ENCODE measurements at regions of chr1 and their contacts with region 1.

Region 1: DNA sequence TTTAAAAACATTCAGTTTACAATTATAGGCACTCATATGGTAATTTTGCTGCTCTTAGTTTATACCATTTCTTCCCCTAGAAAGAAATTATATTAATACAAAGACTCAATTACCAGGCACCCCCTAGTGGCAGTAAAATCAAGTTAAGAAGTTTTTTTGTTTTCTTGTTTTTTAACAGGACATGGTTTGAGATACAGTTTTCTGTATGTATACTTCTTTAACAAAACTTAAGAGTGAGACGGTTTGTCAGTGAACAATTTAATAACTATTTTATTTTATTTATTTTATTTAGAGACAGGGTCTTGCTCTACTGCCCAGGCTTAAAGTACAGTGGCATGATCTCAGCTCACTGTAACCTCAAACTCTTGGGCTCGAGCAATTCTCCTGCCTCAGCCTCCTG is 224.6 kb downstream of the FAF1 start:
- DNase-seq: peak; percentile 33
- ATAC-seq: peak; percentile 65
- H3K4me3 ChIP-seq: no peak overlapping the region
- H3K27ac ChIP-seq: no peak overlapping the region
- H3K4me1 ChIP-seq: no peaks in the 10 kb centered on the region
- H3K27me3 ChIP-seq: no peaks in the 10 kb centered on the region
- CTCF ChIP-seq: peak; percentile 60
- POLR2A ChIP-seq: no peak
- RAD21 ChIP-seq: peak; percentile 41

Region 2: DNA sequence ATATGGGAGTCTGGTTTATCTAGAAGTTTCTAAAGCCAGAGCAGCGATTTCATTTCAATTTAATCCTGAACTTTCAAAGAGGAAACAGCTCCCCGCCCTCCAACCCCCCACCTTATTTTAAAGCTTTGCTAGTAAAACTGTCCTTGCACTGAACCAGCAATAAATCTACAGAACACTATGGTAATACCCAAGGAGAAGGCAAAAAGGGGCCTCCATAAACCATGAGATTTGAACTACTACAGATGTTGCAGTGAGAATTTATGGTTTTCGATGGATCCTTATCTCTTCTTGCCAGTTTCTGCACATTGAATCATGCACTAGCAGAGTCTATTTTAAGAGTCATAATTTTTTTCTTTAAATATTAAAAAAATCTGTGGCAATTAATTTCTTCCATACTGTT is 1894.0 kb before region 1 on chr1:
- CTCF ChIA-PET with region 1: no interaction called
- POLR2A ChIA-PET with region 1: no interaction called
- dilution Hi-C with region 1: no loop called
- in situ Hi-C with region 1: no loop called
- intact Hi-C with region 1: no loop called
- DNase-seq: no peak
- ATAC-seq: no peak
- H3K4me3 ChIP-seq: no peak overlapping the region
- H3K27ac ChIP-seq: no peak overlapping the region
- H3K4me1 ChIP-seq: no peaks in the 10 kb centered on the region
- H3K27me3 ChIP-seq: no peaks in the 10 kb centered on the region
- CTCF ChIP-seq: no peak
- POLR2A ChIP-seq: no peak
- RAD21 ChIP-seq: no peak

Region 3: DNA sequence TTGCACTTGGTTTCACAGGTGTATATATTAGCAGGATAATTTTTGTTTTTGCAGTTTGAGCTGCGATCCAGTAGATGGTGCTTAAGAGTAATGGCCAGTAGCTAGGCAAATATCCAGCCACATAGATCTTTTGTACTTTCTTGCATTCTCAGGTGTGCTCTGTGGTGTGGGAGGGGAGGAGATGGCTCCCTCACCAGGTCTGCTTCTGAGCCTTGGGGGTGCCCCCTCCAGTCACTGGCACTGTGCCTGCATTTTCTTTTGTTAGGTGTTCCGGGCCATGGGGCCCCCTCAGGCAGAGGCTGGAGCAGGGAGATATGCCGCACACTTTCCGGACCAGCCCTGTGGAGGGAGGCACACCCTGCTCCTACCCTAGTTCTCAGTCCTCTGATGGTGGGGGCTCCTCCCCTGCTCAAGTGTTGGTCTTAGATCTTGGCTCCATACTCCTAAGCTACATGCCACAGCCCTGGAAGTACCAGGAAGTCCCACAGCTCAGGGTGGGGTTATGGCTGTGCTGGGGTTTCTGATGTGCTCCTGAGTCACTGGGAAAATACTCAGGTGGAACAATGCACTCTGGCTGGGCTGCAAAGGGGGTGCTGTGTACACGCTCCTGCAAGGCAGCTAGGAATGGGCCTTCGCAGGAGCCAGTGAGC is 114.6 kb before region 1 on chr1:
- CTCF ChIA-PET with region 1: no interaction called
- POLR2A ChIA-PET with region 1: no interaction called
- dilution Hi-C with region 1: no loop called
- in situ Hi-C with region 1: no loop called
- intact Hi-C with region 1: loop called (anchors 1 kb)
- DNase-seq: peak; percentile 40
- ATAC-seq: peak; percentile 82
- H3K4me3 ChIP-seq: no peak overlapping the region
- H3K27ac ChIP-seq: no peak overlapping the region
- H3K4me1 ChIP-seq: peaks cover 3% of the 10 kb centered on the region
- H3K27me3 ChIP-seq: no peaks in the 10 kb centered on the region
- CTCF ChIP-seq: peak; percentile 70
- POLR2A ChIP-seq: no peak
- RAD21 ChIP-seq: peak; percentile 69

Region 4: DNA sequence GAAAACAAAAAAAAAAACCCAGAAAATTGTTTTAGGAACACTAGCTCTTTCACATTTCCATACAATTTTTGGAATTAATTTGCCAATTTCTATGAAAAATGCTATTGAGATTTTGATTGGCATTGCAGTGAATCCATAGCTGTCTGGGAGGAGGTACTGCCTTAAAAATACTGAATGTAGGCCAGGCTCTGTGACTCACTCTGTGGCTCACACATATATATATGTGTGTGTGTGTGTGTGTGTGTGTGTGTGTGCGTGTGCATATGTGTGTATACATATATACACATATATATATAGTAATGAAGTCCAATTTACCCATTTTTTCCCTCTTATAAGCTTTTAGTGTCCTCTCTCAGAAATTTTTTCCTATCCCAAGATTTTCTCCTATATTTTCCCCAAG is 98.0 kb before region 1 on chr1:
- CTCF ChIA-PET with region 1: no interaction called
- POLR2A ChIA-PET with region 1: no interaction called
- dilution Hi-C with region 1: no loop called
- in situ Hi-C with region 1: no loop called
- intact Hi-C with region 1: no loop called
- DNase-seq: peak; percentile 21
- ATAC-seq: no peak
- H3K4me3 ChIP-seq: no peak overlapping the region
- H3K27ac ChIP-seq: no peak overlapping the region
- H3K4me1 ChIP-seq: no peaks in the 10 kb centered on the region
- H3K27me3 ChIP-seq: no peaks in the 10 kb centered on the region
- CTCF ChIP-seq: no peak
- POLR2A ChIP-seq: no peak
- RAD21 ChIP-seq: no peak

Region 5: DNA sequence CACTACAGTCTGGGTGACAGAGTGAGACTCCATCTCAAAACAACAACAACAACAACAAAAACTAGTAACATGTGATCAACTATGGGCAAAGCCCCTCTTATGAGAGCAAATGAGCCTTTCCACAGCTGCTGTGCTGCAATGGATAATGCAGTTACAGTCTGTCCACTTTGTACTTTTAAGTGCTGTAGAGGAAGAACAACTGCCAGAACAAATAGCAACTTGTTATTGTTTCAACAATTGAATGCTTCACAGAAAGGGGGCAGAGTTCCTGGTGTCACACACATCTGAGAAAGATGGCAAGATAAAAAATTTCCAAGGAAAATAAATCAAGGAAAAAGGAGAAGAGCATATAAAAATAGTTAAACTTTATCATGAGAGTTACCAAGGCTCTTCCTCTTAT is 68.6 kb before region 1 on chr1:
- CTCF ChIA-PET with region 1: no interaction called
- POLR2A ChIA-PET with region 1: no interaction called
- dilution Hi-C with region 1: no loop called
- in situ Hi-C with region 1: no loop called
- intact Hi-C with region 1: no loop called
- DNase-seq: no peak
- ATAC-seq: no peak
- H3K4me3 ChIP-seq: no peak overlapping the region
- H3K27ac ChIP-seq: no peak overlapping the region
- H3K4me1 ChIP-seq: peaks cover 9% of the 10 kb centered on the region
- H3K27me3 ChIP-seq: no peaks in the 10 kb centered on the region
- CTCF ChIP-seq: no peak
- POLR2A ChIP-seq: no peak
- RAD21 ChIP-seq: no peak

Region 6: DNA sequence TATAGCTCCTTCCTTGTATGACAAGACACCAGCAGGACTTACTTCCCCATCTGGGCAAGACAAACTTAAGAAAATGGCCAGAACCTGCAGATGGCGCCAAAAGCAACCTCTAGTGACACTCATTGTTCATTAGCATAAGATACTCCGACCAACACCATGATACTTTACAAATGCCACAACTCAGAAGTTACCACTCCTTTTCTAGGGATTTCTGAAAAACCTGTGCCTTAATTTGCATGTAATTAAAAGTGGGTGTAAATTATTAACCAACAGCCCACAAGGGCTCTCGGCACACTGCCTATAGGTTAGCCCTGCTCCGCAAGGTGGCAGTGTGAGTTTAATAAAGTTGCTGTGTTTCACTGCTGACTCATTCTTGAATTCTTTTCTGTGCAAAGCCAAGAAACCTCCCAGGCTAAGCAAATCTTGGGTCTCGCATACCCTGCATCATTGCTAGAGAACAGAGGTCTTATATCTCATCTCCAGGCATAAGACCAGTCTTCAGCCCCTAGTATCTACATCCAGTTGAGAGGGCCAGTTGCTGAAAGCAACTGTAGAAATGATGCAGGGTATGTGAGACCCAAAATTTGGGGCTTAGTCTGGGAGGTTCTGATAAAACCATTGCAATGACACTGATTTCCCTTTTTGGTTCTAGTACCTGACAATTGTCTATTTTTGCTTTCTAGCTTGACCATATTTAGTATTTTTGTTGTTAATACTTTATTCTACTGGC is 138.2 kb after region 1 on chr1:
- CTCF ChIA-PET with region 1: interaction called, 13 read pairs
- POLR2A ChIA-PET with region 1: no interaction called
- dilution Hi-C with region 1: no loop called
- in situ Hi-C with region 1: no loop called
- intact Hi-C with region 1: no loop called
- DNase-seq: peak; percentile 37
- ATAC-seq: peak; percentile 70
- H3K4me3 ChIP-seq: no peak overlapping the region
- H3K27ac ChIP-seq: no peak overlapping the region
- H3K4me1 ChIP-seq: 0 out of 2 replicates have a peak, but pooled peaks cover 1% of the 10 kb centered on the region
- H3K27me3 ChIP-seq: no peaks in the 10 kb centered on the region
- CTCF ChIP-seq: peak; percentile 29
- POLR2A ChIP-seq: no peak
- RAD21 ChIP-seq: no peak; the same call in 1 of the 2 replicates

Measured in IMR-90 (cell line).